ENCODE measurements at regions of chr1 and their contacts with region 1.

Region 1: GRCh38 chr1:245888809-245889208 is 618.3 kb downstream of the SMYD3 start:
- DNase-seq: peak in 1 of 4 experiments; percentile 41
- ATAC-seq: peak; percentile 73
- H3K4me3 ChIP-seq: no peak overlapping the region
- H3K27ac ChIP-seq: no peak overlapping the region
- H3K4me1 ChIP-seq: no peaks in the 10 kb centered on the region
- H3K27me3 ChIP-seq: no peaks in the 10 kb centered on the region
- CTCF ChIP-seq: peak; percentile 40 to 53 (median 50); a peak in 5 of 6 replicates
- EP300 ChIP-seq: no peak
- POLR2A ChIP-seq: no peak
- RAD21 ChIP-seq: peak in 1 of 2 experiments; percentile 54; a peak in 2 of 4 replicates

Region 2: GRCh38 chr1:245411245-245412036 is 477.4 kb before region 1 on chr1:
- CTCF ChIA-PET with region 1: no interaction called
- POLR2A ChIA-PET with region 1: no interaction called
- in situ Hi-C with region 1: no loop called
- intact Hi-C with region 1: no loop called
- DNase-seq: no peak
- ATAC-seq: no peak
- H3K4me3 ChIP-seq: no peak overlapping the region
- H3K27ac ChIP-seq: no peak overlapping the region
- H3K4me1 ChIP-seq: no peaks in the 10 kb centered on the region
- H3K27me3 ChIP-seq: peaks cover 34 to 70% of the 10 kb centered on the region in 2 experiments
- CTCF ChIP-seq: no peak
- EP300 ChIP-seq: no peak
- POLR2A ChIP-seq: no peak
- RAD21 ChIP-seq: no peak

Region 3: DNA sequence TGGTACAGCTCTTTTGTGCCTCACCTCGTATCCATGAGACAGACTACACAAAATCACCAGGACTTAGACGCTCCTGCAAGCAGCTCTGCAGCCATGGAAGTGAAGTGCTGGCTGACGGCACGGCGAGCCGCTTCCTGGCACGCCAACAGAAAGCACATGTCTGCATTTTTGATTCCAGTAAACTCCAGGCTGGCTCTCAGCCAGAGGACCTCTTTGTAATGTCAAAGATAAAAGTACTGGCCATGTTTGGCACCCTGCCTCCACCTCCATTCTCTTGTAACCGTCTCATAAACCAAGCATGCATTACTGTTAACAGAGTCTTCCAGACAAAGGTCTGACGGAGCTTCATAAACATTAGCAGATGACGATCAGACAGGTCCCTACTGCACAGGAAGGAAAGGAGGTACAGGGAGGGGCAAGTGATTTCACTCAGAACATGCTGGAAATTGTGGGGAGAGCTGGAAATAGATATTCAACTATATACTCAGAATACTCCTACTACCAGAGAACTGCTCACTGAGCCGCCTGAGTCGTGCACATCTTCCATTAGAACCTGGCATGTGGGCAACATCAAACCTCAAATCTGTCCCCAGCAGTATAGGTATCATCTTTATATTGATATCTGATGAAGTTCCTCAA is 13.7 kb before region 1 on chr1:
- CTCF ChIA-PET with region 1: no interaction called
- POLR2A ChIA-PET with region 1: interaction called, 11 read pairs
- in situ Hi-C with region 1: no loop called
- intact Hi-C with region 1: no loop called
- DNase-seq: peak; percentile 35 to 92 (median 58)
- ATAC-seq: peak; percentile 85
- H3K4me3 ChIP-seq: no peak overlapping the region
- H3K27ac ChIP-seq: peak overlapping the region; percentile 59
- H3K4me1 ChIP-seq: peaks cover 10 to 28% of the 10 kb centered on the region in 2 experiments; a peak in 4 of 5 replicates
- H3K27me3 ChIP-seq: no peaks in the 10 kb centered on the region
- CTCF ChIP-seq: no peak
- EP300 ChIP-seq: peak; percentile 60; the same call in 1 of the 2 replicates
- POLR2A ChIP-seq: no peak
- RAD21 ChIP-seq: no peak